ENCODE measurements at regions of chr12 and their contacts with region 1.

Region 1: GRCh38 chr12:31288381-31288780 is 37.6 kb downstream of the SINHCAF start:
- DNase-seq: no peak
- H3K4me3 ChIP-seq: no peak overlapping the region
- H3K27ac ChIP-seq: no peak overlapping the region
- H3K4me1 ChIP-seq: peaks cover 0 to 10% (median 3%) of the 10 kb centered on the region in 4 donors
- H3K27me3 ChIP-seq: no peaks in the 10 kb centered on the region
- CTCF ChIP-seq: no peak
- EP300 ChIP-seq: no peak
- POLR2A ChIP-seq: no peak

Region 2: DNA sequence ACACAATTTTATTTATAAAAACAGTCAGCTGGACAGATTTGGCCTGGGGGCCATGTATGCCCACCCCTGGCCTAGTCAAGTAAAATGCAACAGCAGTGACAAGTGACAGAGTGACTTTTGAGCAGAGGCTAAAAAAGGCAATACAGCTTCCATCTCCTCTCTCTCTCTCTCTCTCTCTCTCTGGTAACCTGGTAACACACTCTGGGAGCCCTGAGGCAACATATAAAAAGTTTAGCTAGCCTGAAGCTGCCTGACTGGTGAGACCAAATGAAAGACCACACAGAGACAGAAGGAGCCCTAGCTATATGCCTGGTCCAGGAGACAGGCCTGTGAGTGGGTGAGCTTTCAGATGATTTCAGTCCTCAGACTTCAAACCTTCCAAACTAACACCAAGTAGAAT is 197.2 kb after region 1 on chr12:
- in situ Hi-C with region 1: no loop called
- intact Hi-C with region 1: loop called (anchors 5 kb)
- DNase-seq: no peak
- H3K4me3 ChIP-seq: no peak overlapping the region
- H3K27ac ChIP-seq: no peak overlapping the region
- H3K4me1 ChIP-seq: no peaks in the 10 kb centered on the region
- H3K27me3 ChIP-seq: no peaks in the 10 kb centered on the region
- CTCF ChIP-seq: no peak
- EP300 ChIP-seq: no peak
- POLR2A ChIP-seq: no peak